Endothelial cell of umbilical vein (primary cell): ENCODE measurements at regions of chr11 and their contacts with region 1.

Region 1: DNA sequence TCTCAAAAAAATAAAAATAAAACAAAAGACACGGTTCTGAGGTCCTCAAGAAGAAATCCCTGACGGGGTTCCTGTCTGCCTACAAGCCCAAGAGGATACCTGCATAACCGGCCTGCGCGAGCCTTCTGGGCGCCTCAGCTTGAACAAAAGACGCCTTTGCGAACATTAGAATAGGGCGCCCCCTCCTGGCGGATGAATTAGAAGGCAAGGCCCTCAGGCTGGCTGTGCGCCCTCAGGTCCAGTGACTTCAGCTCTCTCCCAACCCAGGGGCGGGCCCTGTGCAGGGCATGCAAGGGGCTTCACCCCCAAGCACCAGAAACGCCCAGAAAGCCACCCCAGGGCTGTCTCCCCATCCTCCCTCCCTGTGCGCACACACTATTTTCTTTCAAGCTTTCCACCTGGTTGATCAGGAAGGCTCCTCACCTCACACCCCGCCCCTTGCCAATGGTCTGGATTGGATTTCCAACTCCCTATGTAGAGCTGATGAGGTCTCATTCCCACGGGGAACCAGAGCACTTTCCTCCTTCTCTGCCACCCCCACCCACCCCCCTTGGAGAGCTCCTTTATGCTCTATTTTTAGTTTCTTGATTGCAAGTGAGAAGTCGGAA is 273.3 kb downstream of the BUD13 start:
- DNase-seq: peak; percentile 73
- H3K4me3 ChIP-seq: no peak overlapping the region
- H3K27ac ChIP-seq: no peak overlapping the region
- H3K4me1 ChIP-seq: no peaks in the 10 kb centered on the region
- H3K27me3 ChIP-seq: peaks cover 15 to 18% of the 10 kb centered on the region in 2 experiments
- CTCF ChIP-seq: peak; percentile 64 to 84
- POLR2A ChIP-seq: no peak

Region 2: GRCh38 chr11:116217006-116217405 is 282.5 kb before region 1 on chr11:
- CTCF ChIA-PET with region 1: interaction called, 40 read pairs
- POLR2A ChIA-PET with region 1: no interaction called
- dilution Hi-C with region 1: no loop called
- intact Hi-C with region 1: loop called (anchors 2 kb)
- DNase-seq: peak; percentile 57
- H3K4me3 ChIP-seq: no peak overlapping the region
- H3K27ac ChIP-seq: no peak overlapping the region
- H3K4me1 ChIP-seq: no peaks in the 10 kb centered on the region
- H3K27me3 ChIP-seq: no peaks in the 10 kb centered on the region
- CTCF ChIP-seq: peak; percentile 86 to 89
- POLR2A ChIP-seq: no peak

Region 3: DNA sequence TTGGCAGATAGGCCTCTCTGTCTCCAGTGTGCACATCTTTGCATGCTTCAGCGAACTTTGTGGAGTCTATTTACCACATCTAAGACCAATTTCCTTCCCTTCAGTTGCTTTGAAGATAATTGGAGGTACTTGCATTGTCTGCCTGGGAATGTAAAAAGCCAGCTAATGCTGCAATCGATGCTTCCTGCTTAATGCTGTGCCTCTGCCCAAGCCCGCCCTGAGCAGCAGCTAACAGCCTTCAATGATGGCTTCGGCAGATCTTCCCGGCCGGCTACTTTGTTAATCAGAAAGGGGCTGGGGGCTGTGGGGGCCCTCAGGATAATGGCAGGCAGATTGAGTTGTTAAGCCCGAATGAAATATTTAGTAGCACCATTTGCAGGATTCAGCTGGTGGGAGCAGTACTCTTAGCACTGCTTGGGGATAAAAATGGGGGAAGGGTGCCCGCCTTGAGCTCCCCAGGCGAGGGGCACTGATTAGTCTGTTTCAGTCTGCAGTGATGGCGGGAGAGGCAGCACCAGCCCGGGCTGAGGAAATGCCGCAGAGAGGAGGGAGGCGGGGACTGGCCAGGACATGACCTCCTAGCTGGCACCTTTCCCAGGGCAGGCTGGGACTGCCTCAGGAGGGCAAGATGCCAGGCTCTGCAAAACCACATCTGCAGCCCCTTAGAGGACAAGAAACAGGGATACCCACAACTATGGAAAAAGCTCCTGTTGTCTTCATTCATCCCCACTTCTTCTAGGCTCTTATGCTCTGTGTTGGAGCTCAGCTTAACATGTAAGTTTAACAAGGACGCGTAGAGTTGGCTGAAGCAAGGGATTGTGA is 186.7 kb before region 1 on chr11:
- CTCF ChIA-PET with region 1: interaction called, 16 read pairs
- POLR2A ChIA-PET with region 1: no interaction called
- dilution Hi-C with region 1: no loop called
- intact Hi-C with region 1: no loop called
- DNase-seq: peak; percentile 83
- H3K4me3 ChIP-seq: no peak overlapping the region
- H3K27ac ChIP-seq: no peak overlapping the region
- H3K4me1 ChIP-seq: peaks cover 12% of the 10 kb centered on the region
- H3K27me3 ChIP-seq: peaks cover 0 to 2% of the 10 kb centered on the region in 2 experiments
- CTCF ChIP-seq: no peak
- POLR2A ChIP-seq: no peak

Region 4: DNA sequence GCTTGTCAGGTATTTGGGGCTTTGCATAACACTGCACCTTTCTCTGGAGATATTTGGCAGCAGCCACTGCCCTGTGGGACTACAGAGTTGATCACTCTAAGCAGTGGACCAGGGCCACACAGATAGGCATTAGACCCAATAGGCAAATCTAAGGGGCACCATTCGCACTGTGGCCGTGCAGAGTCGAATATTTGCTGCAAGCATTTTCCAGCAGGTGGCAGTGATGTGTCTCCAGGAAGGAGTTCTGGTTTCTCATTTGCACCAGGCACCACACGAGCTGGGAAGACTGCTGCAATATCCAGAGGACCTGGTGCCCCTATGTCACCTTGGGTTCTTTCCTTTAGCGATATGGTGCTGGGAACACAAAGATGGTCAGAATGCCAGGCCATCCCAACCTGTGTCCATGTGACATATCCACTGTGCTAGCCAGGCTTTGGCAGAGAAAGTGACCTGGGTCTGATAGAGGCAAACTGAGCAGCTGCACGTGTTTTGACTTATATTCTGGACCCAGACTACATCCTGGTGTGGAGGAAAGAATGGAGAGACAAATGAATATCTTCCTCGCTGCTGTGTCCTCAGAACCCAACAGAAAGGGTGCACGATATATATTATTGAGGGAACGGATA is 45.4 kb before region 1 on chr11:
- CTCF ChIA-PET with region 1: interaction called, 169 read pairs
- POLR2A ChIA-PET with region 1: no interaction called
- dilution Hi-C with region 1: no loop called
- intact Hi-C with region 1: loop called (anchors 1 kb)
- DNase-seq: peak; percentile 65
- H3K4me3 ChIP-seq: no peak overlapping the region
- H3K27ac ChIP-seq: no peak overlapping the region
- H3K4me1 ChIP-seq: no peaks in the 10 kb centered on the region
- H3K27me3 ChIP-seq: no peaks in the 10 kb centered on the region
- CTCF ChIP-seq: peak; percentile 53 to 80
- POLR2A ChIP-seq: no peak

Region 5: GRCh38 chr11:116471608-116472256 is 27.8 kb before region 1 on chr11:
- CTCF ChIA-PET with region 1: interaction called, 27 read pairs
- POLR2A ChIA-PET with region 1: no interaction called
- dilution Hi-C with region 1: no loop called
- intact Hi-C with region 1: loop called (anchors 1 kb)
- DNase-seq: peak; percentile 96
- H3K4me3 ChIP-seq: no peak overlapping the region
- H3K27ac ChIP-seq: peak overlapping the region; percentile 75
- H3K4me1 ChIP-seq: peaks cover 25% of the 10 kb centered on the region
- H3K27me3 ChIP-seq: peaks cover under 1 to 2% of the 10 kb centered on the region in 2 experiments
- CTCF ChIP-seq: no peak
- POLR2A ChIP-seq: no peak

Region 6: GRCh38 chr11:116513894-116514293 is 14.4 kb after region 1 on chr11:
- CTCF ChIA-PET with region 1: interaction called, 27 read pairs
- POLR2A ChIA-PET with region 1: no interaction called
- dilution Hi-C with region 1: no loop called
- intact Hi-C with region 1: no loop called
- DNase-seq: peak; percentile 78
- H3K4me3 ChIP-seq: no peak overlapping the region
- H3K27ac ChIP-seq: no peak overlapping the region
- H3K4me1 ChIP-seq: no peaks in the 10 kb centered on the region
- H3K27me3 ChIP-seq: peaks cover 0 to 5% of the 10 kb centered on the region in 2 experiments
- CTCF ChIP-seq: peak; percentile 43 to 71
- POLR2A ChIP-seq: no peak

Region 7: GRCh38 chr11:116579031-116579653 is 79.6 kb after region 1 on chr11:
- CTCF ChIA-PET with region 1: no interaction called
- POLR2A ChIA-PET with region 1: no interaction called
- dilution Hi-C with region 1: no loop called
- intact Hi-C with region 1: no loop called
- DNase-seq: no peak
- H3K4me3 ChIP-seq: no peak overlapping the region
- H3K27ac ChIP-seq: no peak overlapping the region
- H3K4me1 ChIP-seq: peaks cover 3% of the 10 kb centered on the region
- H3K27me3 ChIP-seq: peaks cover 57 to 61% of the 10 kb centered on the region in 2 experiments
- CTCF ChIP-seq: no peak
- POLR2A ChIP-seq: no peak

Region 8: GRCh38 chr11:116691771-116692177 is 192.3 kb after region 1 on chr11:
- CTCF ChIA-PET with region 1: interaction called, 9 read pairs
- POLR2A ChIA-PET with region 1: no interaction called
- dilution Hi-C with region 1: no loop called
- intact Hi-C with region 1: loop called (anchors 5 kb)
- DNase-seq: peak; percentile 24
- H3K4me3 ChIP-seq: no peak overlapping the region
- H3K27ac ChIP-seq: no peak overlapping the region
- H3K4me1 ChIP-seq: no peaks in the 10 kb centered on the region
- H3K27me3 ChIP-seq: no peaks in the 10 kb centered on the region
- CTCF ChIP-seq: peak; percentile 75 to 91
- POLR2A ChIP-seq: no peak